ENCODE measurements at regions of chr2 and their contacts with region 1.

Region 1: GRCh38 chr2:95728878-95729596 is 137.2 kb downstream of the TRIM43 start:
- DNase-seq: no peak
- ATAC-seq: peak; percentile 49
- H3K4me3 Mint-ChIP-seq: no peak overlapping the region
- H3K27ac Mint-ChIP-seq: no peak overlapping the region
- H3K4me1 Mint-ChIP-seq: no peaks in the 10 kb centered on the region
- H3K27me3 Mint-ChIP-seq: peaks cover 16% of the 10 kb centered on the region
- CTCF ChIP-seq: no peak

Region 2: GRCh38 chr2:95185197-95185596 is 543.8 kb before region 1 on chr2:
- CTCF ChIA-PET with region 1: no interaction called
- POLR2A ChIA-PET with region 1: no interaction called
- intact Hi-C with region 1: loop called (anchors 5 kb)
- DNase-seq: no peak
- ATAC-seq: no peak
- H3K4me3 Mint-ChIP-seq: no peak overlapping the region
- H3K27ac Mint-ChIP-seq: no peak overlapping the region
- H3K4me1 Mint-ChIP-seq: no peaks in the 10 kb centered on the region
- H3K27me3 Mint-ChIP-seq: peaks cover 3% of the 10 kb centered on the region
- CTCF ChIP-seq: no peak

Region 3: DNA sequence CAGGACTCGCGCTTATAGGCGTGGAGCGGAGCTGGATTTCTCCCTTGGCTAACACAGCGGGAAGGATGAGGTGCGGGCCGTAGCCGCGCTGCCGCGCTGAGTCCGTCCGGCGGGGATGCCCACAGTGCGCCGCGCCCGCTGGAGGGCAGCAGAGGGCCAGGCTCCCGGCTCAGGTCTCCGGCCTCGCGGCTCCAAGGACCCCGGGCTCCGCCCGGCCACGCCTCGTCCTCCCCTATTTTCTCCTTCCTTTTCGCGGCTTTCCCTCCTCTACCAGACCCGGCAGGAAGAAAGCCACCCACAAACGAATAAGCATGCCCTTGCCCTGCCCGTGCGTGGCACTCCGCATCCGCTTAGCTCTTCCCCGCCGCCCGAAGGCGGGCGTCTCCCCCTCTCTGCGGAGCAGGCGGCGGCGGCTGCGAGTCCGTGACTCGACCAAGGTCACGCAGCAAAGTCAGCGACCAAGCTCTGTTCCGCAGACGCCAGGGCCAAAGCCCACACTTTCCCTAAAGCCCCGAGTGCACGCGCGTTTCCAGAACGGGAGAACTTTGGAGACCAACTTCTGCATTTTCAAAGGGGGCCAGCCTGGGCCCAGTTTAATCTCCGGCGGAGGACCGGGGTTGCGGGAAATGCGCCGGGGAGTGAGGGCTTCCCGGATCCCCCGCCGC is 383.3 kb before region 1 on chr2:
- CTCF ChIA-PET with region 1: no interaction called
- POLR2A ChIA-PET with region 1: no interaction called
- intact Hi-C with region 1: loop called (anchors 1 kb)
- DNase-seq: peak; percentile 60
- ATAC-seq: peak; percentile 91
- H3K4me3 Mint-ChIP-seq: peak overlapping the region; percentile 81
- H3K27ac Mint-ChIP-seq: no peak overlapping the region
- H3K4me1 Mint-ChIP-seq: peaks cover 9% of the 10 kb centered on the region
- H3K27me3 Mint-ChIP-seq: peaks cover 39% of the 10 kb centered on the region
- CTCF ChIP-seq: peak; percentile 76

Region 4: DNA sequence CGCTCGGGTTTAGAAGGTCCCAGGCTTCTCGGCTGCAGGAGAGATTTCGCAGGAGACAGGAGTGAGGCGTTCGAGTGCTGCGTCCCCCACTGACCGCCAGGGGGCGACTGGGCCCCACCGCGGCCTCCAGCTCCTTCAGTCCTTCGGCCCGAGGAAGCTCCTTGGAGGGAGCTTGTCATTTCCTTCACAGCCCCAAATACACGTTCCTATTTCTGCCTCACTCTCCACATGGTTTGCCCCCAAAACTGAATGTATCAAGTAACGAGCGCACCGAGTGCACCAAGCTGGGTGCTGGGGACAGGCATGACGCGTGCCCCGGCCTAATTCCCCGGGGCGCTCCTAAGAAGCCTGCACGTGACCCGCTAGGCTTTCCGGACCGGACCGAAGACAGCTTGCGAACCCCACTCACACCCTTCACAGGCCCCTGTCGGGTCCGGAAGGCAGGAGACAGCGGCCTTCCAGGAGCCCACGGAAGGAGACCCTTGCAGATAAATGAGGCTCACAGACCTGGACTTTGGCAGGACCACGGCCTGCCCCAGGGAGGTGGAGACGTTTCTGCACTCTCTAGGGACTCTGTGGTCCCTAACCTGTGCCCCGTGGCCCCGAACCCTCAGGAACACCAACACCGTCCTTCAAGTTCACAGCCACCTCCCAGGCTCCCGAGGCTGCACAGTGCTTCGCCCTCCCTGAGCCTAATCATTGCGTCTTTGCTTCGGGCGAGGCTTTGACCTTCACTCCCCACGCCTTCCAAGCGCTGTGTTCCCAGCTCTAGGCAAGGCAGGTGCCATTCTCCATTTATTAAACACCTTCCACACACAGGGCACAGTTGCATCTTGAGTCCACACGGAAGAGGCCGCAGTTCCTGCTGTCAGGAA is 339.6 kb before region 1 on chr2:
- CTCF ChIA-PET with region 1: no interaction called
- POLR2A ChIA-PET with region 1: no interaction called
- intact Hi-C with region 1: loop called (anchors 10 kb)
- DNase-seq: no peak
- ATAC-seq: no peak
- H3K4me3 Mint-ChIP-seq: no peak overlapping the region
- H3K27ac Mint-ChIP-seq: no peak overlapping the region
- H3K4me1 Mint-ChIP-seq: no peaks in the 10 kb centered on the region
- H3K27me3 Mint-ChIP-seq: peaks cover 8% of the 10 kb centered on the region
- CTCF ChIP-seq: no peak

Region 5: GRCh38 chr2:95709831-95710230 is 19.2 kb before region 1 on chr2:
- CTCF ChIA-PET with region 1: no interaction called
- POLR2A ChIA-PET with region 1: no interaction called
- intact Hi-C with region 1: no loop called
- DNase-seq: no peak
- ATAC-seq: no peak
- H3K4me3 Mint-ChIP-seq: no peak overlapping the region
- H3K27ac Mint-ChIP-seq: no peak overlapping the region
- H3K4me1 Mint-ChIP-seq: no peaks in the 10 kb centered on the region
- H3K27me3 Mint-ChIP-seq: peaks cover 2% of the 10 kb centered on the region
- CTCF ChIP-seq: no peak

Region 6: GRCh38 chr2:96116879-96117697 is 388.1 kb after region 1 on chr2:
- CTCF ChIA-PET with region 1: no interaction called
- POLR2A ChIA-PET with region 1: no interaction called
- intact Hi-C with region 1: no loop called
- DNase-seq: peak; percentile 82
- ATAC-seq: peak; percentile 79
- H3K4me3 Mint-ChIP-seq: peak overlapping the region; percentile 71
- H3K27ac Mint-ChIP-seq: peak overlapping the region; percentile 41
- H3K4me1 Mint-ChIP-seq: peaks cover 25% of the 10 kb centered on the region
- H3K27me3 Mint-ChIP-seq: peaks cover 22% of the 10 kb centered on the region
- CTCF ChIP-seq: peak; percentile 56